CD8-positive, alpha-beta memory T cell (primary cell): ENCODE measurements at regions of chrX and their contacts with region 1.

Region 1: DNA sequence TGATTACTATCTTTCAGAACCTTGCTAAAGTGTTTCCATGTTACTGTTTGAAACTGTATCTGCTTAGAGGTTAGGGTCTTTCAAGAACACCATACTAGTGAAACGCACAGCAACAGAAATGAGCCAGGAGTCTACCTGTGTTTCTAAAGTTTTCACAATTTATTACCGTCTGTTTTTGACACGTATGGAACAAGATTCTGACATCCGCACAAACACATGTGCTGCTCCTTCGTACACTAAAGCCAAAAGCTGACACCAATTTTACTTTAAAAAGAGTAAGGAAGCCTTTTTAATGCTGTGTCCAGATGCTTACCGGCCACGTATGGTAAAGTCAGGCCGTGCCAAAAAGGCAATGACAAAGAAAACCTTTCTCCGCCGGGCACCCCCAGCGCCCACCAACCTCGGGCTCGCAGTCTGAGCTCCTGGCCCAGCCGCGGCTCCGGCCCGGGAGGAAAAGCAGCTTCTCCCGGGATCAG is 532 bp downstream of the RPS4X start:
- DNase-seq: peak in 1 of 5 donors; percentile 6
- H3K4me3 ChIP-seq: peak overlapping the region; percentile 81
- H3K4me3 Mint-ChIP-seq: peak overlapping the region; percentile 85 to 98 (median 91)
- H3K27ac ChIP-seq: peak overlapping the region; percentile 80
- H3K27ac Mint-ChIP-seq: peak overlapping the region; percentile 75 to 97 (median 92)
- H3K4me1 ChIP-seq: peaks cover 32% of the 10 kb centered on the region
- H3K4me1 Mint-ChIP-seq: peaks cover 46 to 50% (median 49%) of the 10 kb centered on the region in 3 donors
- H3K27me3 ChIP-seq: no peaks in the 10 kb centered on the region
- H3K27me3 Mint-ChIP-seq: peaks cover 6 to 9% of the 10 kb centered on the region in 2 donors

Region 2: GRCh38 chrX:72181178-72182125 is 95.1 kb before region 1 on chrX and contains the start of gene PIN4:
- CTCF ChIA-PET with region 1: interaction called, 11 read pairs
- POLR2A ChIA-PET with region 1: interaction called, 4 read pairs
- DNase-seq: peak; percentile 66 to 91 (median 83)
- H3K4me3 ChIP-seq: peak within 1 kb of the TSS; percentile 95
- H3K4me3 Mint-ChIP-seq: peak within 1 kb of the TSS in 1 of 7 donors; percentile 40
- H3K27ac ChIP-seq: peak within 1 kb of the TSS; percentile 61
- H3K27ac Mint-ChIP-seq: peak within 1 kb of the TSS in 1 of 8 donors; percentile 50
- H3K4me1 ChIP-seq: peaks cover 14% of the 10 kb centered on the region
- H3K4me1 Mint-ChIP-seq: peaks cover 10 to 20% (median 16%) of the 10 kb centered on the region in 3 donors
- H3K27me3 ChIP-seq: no peaks in the 10 kb centered on the region
- H3K27me3 Mint-ChIP-seq: peaks cover 0 to 1% of the 10 kb centered on the region in 2 donors
- total RNA-seq, gene PIN4: 6.4 to 7.0 TPM

Region 3: DNA sequence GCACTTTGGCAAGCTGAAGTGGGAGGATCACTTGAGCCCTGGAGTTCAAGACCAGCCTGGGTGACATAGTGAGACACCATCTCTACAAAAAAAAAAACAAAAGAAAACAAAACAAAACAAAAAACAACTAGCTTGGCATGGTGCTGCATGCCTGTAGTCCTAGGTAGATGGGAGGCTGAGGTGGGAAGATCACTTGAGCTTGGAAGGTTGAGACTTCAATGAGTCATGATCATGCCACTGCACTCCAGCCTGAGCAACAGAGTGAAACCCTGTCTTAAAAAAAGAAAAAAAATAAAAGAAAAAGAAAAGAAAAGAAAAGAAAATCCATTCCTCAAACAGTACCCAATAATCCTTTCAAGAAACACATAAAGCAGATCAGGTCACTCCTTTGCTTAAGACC is 22.8 kb before region 1 on chrX:
- CTCF ChIA-PET with region 1: no interaction called
- POLR2A ChIA-PET with region 1: no interaction called
- DNase-seq: no peak
- H3K4me3 ChIP-seq: no peak overlapping the region
- H3K4me3 Mint-ChIP-seq: no peak overlapping the region
- H3K27ac ChIP-seq: no peak overlapping the region
- H3K27ac Mint-ChIP-seq: no peak overlapping the region
- H3K4me1 ChIP-seq: no peaks in the 10 kb centered on the region
- H3K4me1 Mint-ChIP-seq: peaks cover 0 to 8% (median 0%) of the 10 kb centered on the region in 3 donors
- H3K27me3 ChIP-seq: no peaks in the 10 kb centered on the region
- H3K27me3 Mint-ChIP-seq: peaks cover 14 to 28% of the 10 kb centered on the region in 2 donors

Region 4: GRCh38 chrX:72634331-72634730 is 357.8 kb after region 1 on chrX:
- CTCF ChIA-PET with region 1: no interaction called
- POLR2A ChIA-PET with region 1: no interaction called
- DNase-seq: no peak
- H3K4me3 ChIP-seq: no peak overlapping the region
- H3K4me3 Mint-ChIP-seq: no peak overlapping the region
- H3K27ac ChIP-seq: no peak overlapping the region
- H3K27ac Mint-ChIP-seq: no peak overlapping the region
- H3K4me1 ChIP-seq: no peaks in the 10 kb centered on the region
- H3K4me1 Mint-ChIP-seq: no peaks in the 10 kb centered on the region
- H3K27me3 ChIP-seq: no peaks in the 10 kb centered on the region
- H3K27me3 Mint-ChIP-seq: peaks cover 7 to 10% of the 10 kb centered on the region in 2 donors